Spleen (tissue), 13 donors: ENCODE measurements at regions of chr17 and their contacts with region 1.

Region 1: GRCh38 chr17:63773381-63774140 is at the start of gene CCDC47:
- DNase-seq: peak; percentile 99
- H3K4me3 ChIP-seq: peak within 1 kb of the TSS; percentile 63 to 98 (median 84)
- H3K27ac ChIP-seq: peak within 1 kb of the TSS; percentile 96 to 99 (median 98)
- H3K4me1 ChIP-seq: peaks cover 25 to 87% (median 73%) of the 10 kb centered on the region in 6 donors
- H3K27me3 ChIP-seq: no peaks in the 10 kb centered on the region
- CTCF ChIP-seq: peak in 2 of 11 experiments; percentile 21 to 41
- POLR2A ChIP-seq: peak; percentile 13 to 94 (median 72)
- total RNA-seq, gene CCDC47: 50.7 to 74.0 (median 63.6) TPM

Region 2: GRCh38 chr17:63714547-63715277 is 58.8 kb before region 1 on chr17:
- intact Hi-C with region 1: no loop called
- DNase-seq: no peak
- H3K4me3 ChIP-seq: no peak overlapping the region
- H3K27ac ChIP-seq: peak overlapping the region in 1 of 8 donors; percentile 8
- H3K4me1 ChIP-seq: peaks cover 0 to 20% (median 3%) of the 10 kb centered on the region in 6 donors
- H3K27me3 ChIP-seq: no peaks in the 10 kb centered on the region
- CTCF ChIP-seq: no peak
- POLR2A ChIP-seq: no peak

Region 3: DNA sequence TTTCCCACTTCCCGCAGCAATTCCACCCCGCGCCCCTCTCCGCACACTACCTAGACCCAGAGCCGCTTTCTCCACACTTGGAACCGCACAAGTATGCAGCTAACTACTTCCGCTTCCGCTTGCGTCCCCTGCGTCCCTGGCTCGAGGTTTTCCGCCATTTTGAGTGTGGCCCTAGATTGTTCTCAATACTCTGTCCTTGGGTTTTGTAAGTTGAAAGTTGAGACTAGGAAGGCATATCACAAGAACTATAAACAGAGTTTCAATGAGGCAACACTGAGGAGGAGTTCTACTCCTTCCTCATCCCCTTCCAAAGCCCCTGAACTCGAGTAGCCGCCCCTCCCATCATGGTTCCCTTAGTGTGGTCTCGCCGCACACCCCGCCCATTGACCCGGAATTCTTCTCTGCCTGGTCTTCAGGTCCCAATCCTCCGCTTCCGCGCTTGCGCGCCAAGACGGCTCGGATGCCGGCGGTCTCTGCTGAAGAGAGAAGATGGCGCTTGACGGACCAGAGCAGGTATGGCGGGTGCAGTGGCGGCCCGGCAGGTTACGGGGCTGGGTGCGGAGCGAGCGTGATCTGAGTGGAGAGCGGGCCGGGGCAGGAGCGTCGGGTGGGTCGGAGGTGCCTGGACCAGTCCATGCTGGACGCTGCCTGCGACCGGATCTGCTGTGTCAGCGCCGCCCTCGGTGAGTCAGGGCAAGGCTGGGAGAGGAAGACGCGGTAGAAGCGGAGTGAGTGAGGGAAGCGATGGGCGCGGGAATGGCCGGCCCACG is 53.6 kb after region 1 on chr17 and contains the starts of genes FTSJ3 and PSMC5:
- intact Hi-C with region 1: loop called (anchors 10 kb)
- DNase-seq: peak; percentile 99
- H3K4me3 ChIP-seq: peak within 1 kb of the TSS; percentile 85 to 98 (median 92)
- H3K27ac ChIP-seq: peak within 1 kb of the TSS; percentile 88 to 94 (median 94)
- H3K4me1 ChIP-seq: peaks cover 25 to 92% (median 62%) of the 10 kb centered on the region in 6 donors
- H3K27me3 ChIP-seq: no peaks in the 10 kb centered on the region
- CTCF ChIP-seq: peak in 9 of 11 experiments; percentile 34 to 71 (median 64)
- POLR2A ChIP-seq: peak; percentile 20 to 76 (median 54)
- total RNA-seq, gene FTSJ3: 26.1 to 45.7 (median 37.7) TPM
- total RNA-seq, gene PSMC5: 74.5 to 102 (median 97.2) TPM